Activated T-helper 2 cell treated with anti-CD3 and anti-CD28 coated beads, Interferon-gamma antibody, Interleukin-2, Interleukin-4, amounts not matched to agents 10 μg/mL and 5 μg/mL and 100 μg/mL, durations not matched to agents 14 hours and 24 hours and 36 hours (primary cell): ENCODE measurements at regions of chr3 and their contacts with region 1.

Region 1: GRCh38 chr3:115783938-115784738 is 160.8 kb downstream of the GAP43 start:
- DNase-seq: peak; percentile 85
- H3K4me3 Mint-ChIP-seq: peak overlapping the region; percentile 82
- H3K27ac Mint-ChIP-seq: peak overlapping the region; percentile 96
- H3K4me1 Mint-ChIP-seq: peaks cover 18% of the 10 kb centered on the region
- H3K27me3 Mint-ChIP-seq: peaks cover 15% of the 10 kb centered on the region

Region 2: DNA sequence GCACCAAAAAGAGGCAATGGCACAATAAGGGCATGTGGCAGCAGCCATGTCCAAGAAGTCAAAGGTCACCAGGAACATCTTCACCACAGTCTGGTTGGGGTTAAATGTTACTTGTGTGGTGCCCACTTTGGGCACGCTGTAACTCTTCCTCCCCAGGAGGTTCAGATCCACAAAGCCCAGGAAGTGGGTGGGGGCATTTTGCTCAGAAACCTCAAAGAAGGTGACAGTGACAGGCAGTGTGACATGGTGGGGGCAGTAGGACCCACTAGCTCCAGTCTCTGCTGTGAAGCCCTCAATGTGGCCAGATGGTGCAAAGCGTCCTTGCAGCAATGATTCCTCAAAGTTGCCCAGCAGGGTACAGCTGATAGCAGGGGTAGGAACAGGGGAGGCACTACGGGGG is 1552.5 kb before region 1 on chr3:
- intact Hi-C with region 1: loop called (anchors 10 kb)
- DNase-seq: no peak
- H3K4me3 Mint-ChIP-seq: no peak overlapping the region
- H3K27ac Mint-ChIP-seq: peak overlapping the region; percentile 76
- H3K4me1 Mint-ChIP-seq: peaks cover 71% of the 10 kb centered on the region
- H3K27me3 Mint-ChIP-seq: no peaks in the 10 kb centered on the region

Region 3: GRCh38 chr3:115375362-115375761 is 408.8 kb before region 1 on chr3:
- intact Hi-C with region 1: no loop called
- DNase-seq: no peak
- H3K4me3 Mint-ChIP-seq: no peak overlapping the region
- H3K27ac Mint-ChIP-seq: no peak overlapping the region
- H3K4me1 Mint-ChIP-seq: no peaks in the 10 kb centered on the region
- H3K27me3 Mint-ChIP-seq: peaks cover 2% of the 10 kb centered on the region